Right ventricle myocardium inferior (tissue), 1 donor: ENCODE measurements at regions of chr17 and their contacts with region 1.

Region 1: DNA sequence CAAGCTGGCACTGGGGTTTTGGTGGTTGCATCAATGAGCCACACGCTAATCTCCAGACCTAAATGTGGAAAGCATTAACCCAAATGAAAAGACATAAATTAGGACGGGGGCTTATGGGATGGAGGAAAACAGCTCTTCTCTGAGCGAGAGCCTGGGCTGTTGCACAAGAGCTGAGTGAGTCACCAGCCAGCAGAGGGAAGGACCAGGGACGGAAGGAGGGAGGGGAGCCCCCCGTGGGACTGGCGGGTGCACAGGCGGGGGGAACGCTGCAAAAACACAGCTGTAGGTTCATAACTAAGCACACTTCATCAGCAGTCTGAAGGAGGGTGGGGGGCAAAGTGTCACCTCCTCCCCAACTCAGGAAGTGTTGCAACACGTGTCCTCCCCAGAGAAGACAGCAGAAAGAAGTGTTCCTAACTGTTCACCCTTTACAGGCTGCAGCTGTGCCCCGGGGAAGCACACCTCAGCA is 83.3 kb downstream of the GAS7 start:
- DNase-seq: peak; percentile 96
- ATAC-seq: peak; percentile 90

Region 2: GRCh38 chr17:10041916-10042588 is 73.1 kb before region 1 on chr17:
- intact Hi-C with region 1: loop called (anchors 2 kb)
- DNase-seq: peak; percentile 46
- ATAC-seq: peak; percentile 74

Region 3: GRCh38 chr17:10069301-10069700 is 45.8 kb before region 1 on chr17:
- intact Hi-C with region 1: loop called (anchors 5 kb)
- DNase-seq: peak; percentile 53
- ATAC-seq: peak; percentile 76

Region 4: DNA sequence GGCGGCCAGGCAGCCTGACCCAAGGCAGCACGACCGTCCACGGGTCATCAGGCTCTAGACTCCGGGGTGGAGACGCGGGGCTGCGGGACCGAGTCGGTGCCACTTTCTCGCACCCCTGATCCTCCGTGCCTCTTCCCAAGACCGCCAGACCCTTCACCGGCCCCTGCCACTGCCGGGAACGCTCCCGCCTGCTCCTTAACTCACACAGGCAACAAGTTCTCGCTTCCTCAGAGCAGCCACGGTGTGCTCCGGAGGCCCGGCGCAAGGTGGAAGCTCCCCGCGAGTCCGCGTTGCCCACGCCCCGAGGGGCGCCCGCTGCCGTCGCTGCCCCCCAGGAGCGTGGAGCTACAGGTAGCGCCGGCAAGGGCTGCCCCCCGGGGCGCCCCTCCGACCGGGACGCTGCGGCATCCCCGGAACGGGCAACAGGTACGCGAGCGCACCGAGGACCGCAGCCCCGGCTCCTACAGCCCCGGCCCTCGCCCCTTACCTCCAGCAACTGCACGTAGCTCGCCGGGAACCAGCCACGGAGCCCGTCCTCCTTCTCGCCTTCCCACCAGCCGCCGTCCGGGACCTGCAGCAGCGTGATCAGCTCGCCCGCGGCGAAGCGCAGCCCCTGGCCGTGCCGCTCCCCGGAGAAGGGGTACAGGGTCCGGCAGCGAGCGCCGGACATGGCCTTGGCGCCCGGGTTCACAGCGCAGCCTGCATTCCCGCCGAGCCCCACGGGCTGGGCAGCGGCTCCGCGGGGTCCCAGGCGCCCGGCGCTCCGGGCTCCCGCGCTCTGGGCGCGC is 82.8 kb after region 1 on chr17:
- intact Hi-C with region 1: loop called (anchors 1 kb)
- DNase-seq: peak; percentile 74
- ATAC-seq: peak; percentile 21